ENCODE measurements at regions of chr3 and their contacts with region 1.

Region 1: DNA sequence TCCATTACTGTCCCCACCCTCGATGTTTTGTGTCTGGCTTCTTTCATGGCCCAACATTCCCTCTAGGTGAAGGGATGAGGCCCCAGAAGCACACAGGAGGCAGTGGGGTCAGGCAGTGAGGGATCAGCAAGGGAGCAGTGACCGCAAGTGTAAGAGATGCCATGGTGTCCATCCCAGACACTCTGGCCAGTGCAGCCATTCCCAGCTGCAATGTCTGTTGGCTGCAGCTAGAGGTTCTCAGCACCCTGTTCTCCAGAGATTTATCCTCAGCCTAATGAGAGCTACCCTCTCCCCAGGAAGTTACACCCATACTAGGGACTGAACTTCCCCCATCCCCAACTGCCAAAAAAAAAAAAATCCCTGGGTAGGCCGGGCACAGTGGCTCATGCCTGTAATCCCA is 40.2 kb downstream of the TRANK1 start:
- DNase-seq: peak; percentile 7 to 44
- H3K4me3 ChIP-seq: no peak overlapping the region
- H3K27ac ChIP-seq: no peak overlapping the region
- H3K4me1 ChIP-seq: no peaks in the 10 kb centered on the region
- H3K27me3 ChIP-seq: no peaks in the 10 kb centered on the region
- CTCF ChIP-seq: peak; percentile 67 to 79 (median 69)
- EP300 ChIP-seq: no peak
- POLR2A ChIP-seq: no peak
- RAD21 ChIP-seq: peak; percentile 75 to 85

Region 2: DNA sequence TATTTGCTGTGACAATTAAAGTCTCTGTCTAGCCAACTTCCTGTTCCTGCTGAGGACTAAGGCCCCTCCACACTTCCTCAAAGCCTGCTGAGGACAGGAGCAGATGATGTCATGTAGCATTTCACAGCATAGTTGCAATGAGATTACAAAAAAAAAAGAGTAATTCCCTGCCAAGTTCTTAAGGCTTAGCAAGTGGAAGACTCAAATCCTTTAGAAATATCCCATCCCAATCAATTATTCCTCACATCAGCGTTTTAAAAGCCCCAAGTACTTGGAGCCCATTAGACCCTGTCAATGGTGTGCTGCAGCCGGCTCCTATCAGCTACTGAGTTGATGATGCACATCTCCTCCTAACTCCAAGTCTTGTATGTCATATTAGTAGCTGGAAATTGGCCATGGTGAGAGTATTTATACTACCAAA is 11.5 kb before region 1 on chr3:
- CTCF ChIA-PET with region 1: interaction called, 40 read pairs
- POLR2A ChIA-PET with region 1: interaction called, 4 read pairs
- DNase-seq: peak in 1 of 2 experiments; percentile 22
- H3K4me3 ChIP-seq: no peak overlapping the region
- H3K27ac ChIP-seq: no peak overlapping the region
- H3K4me1 ChIP-seq: no peaks in the 10 kb centered on the region
- H3K27me3 ChIP-seq: no peaks in the 10 kb centered on the region
- CTCF ChIP-seq: no peak
- EP300 ChIP-seq: no peak
- POLR2A ChIP-seq: no peak
- RAD21 ChIP-seq: no peak

Region 3: DNA sequence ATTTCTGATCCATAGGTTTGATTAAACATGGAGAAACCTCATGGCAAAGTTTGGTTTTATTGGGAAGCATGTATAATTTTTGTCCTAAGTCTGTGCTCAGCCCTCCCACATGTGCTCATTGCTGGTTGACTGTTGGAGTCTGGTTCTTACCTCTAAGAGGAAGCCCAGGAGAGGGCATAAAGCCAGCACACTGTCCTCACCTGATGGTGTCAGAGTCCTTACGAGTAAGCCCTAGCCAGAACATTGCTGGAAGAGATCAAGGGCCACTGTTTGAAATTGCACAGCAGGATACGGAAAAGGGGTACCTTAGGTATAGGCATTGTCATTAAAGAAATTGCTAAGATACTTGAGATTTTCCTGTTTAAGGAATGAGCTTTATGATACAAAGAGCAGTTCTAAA is 110.0 kb after region 1 on chr3:
- CTCF ChIA-PET with region 1: no interaction called
- POLR2A ChIA-PET with region 1: no interaction called
- DNase-seq: no peak
- H3K4me3 ChIP-seq: no peak overlapping the region
- H3K27ac ChIP-seq: no peak overlapping the region
- H3K4me1 ChIP-seq: no peaks in the 10 kb centered on the region; a peak in 1 of 7 replicates
- H3K27me3 ChIP-seq: no peaks in the 10 kb centered on the region
- CTCF ChIP-seq: no peak
- EP300 ChIP-seq: no peak
- POLR2A ChIP-seq: no peak
- RAD21 ChIP-seq: no peak